WTC11 (cell line): ENCODE measurements at regions of chr9 and their contacts with region 1.

Region 1: DNA sequence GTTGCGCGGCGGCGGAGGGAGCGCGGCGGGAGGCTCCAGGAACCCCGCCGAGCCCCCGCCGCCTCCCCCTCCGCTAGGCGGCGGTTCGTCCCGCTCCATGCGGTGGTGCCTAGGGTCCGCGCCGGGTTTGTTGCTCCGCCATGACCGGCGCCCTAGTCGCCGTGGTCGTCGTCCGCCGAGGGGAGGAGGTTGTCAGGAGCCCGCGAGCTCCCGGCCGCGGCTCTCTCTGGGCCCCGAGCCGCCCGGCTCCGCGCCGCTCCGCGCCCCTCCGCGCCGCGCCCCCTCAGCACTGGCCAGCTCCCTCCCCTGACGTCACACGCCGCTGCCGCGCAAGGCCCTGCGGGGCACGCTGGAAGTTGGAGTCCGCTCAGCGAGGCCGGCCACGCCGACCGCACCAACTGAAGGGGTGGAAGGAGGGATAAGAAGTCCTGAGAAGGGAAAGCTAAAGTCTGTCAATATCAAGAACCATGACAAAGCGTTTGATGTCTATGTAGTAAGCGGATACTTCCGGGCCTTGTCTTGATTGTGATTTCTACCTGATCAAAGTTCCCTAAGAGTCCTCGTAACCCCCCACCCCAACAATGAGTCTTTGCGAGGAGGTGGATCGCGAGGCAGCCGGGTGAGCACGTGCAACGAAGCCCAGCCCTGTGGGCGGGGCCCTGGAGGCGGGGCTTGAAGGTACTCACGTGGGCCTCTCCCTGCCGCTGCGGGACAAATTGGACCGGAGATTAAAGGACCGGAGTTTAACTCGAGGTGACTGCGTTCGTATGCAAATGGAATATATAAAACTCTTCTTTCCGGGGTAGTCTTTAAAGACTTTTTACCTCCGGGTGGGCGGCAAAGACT is at the start of gene NR6A1:
- DNase-seq: peak; percentile 98
- ATAC-seq: peak; percentile 81
- H3K4me3 Mint-ChIP-seq: peak within 1 kb of the TSS; percentile 85
- H3K27ac Mint-ChIP-seq: peak within 1 kb of the TSS; percentile 98
- H3K4me1 Mint-ChIP-seq: peaks cover 42% of the 10 kb centered on the region
- H3K27me3 Mint-ChIP-seq: peaks cover 11% of the 10 kb centered on the region
- CTCF ChIP-seq: no peak
- total RNA-seq, gene NR6A1: 164 to 222 TPM (median 218 TPM) in 3 replicates

Region 2: GRCh38 chr9:124708633-124709291 is 62.5 kb before region 1 on chr9:
- CTCF ChIA-PET with region 1: interaction called, 30 read pairs
- POLR2A ChIA-PET with region 1: interaction called, 4 read pairs
- DNase-seq: no peak
- ATAC-seq: no peak
- H3K4me3 Mint-ChIP-seq: no peak overlapping the region
- H3K27ac Mint-ChIP-seq: peak overlapping the region; percentile 91; the same call in 1 of the 2 replicates
- H3K4me1 Mint-ChIP-seq: peaks cover 50% of the 10 kb centered on the region
- H3K27me3 Mint-ChIP-seq: no peaks in the 10 kb centered on the region
- CTCF ChIP-seq: no peak

Region 3: GRCh38 chr9:124782661-124783574 is 11.7 kb after region 1 on chr9:
- CTCF ChIA-PET with region 1: interaction called, 16 read pairs
- POLR2A ChIA-PET with region 1: interaction called, 13 read pairs
- DNase-seq: peak; percentile 14
- ATAC-seq: peak; percentile 8
- H3K4me3 Mint-ChIP-seq: no peak overlapping the region
- H3K27ac Mint-ChIP-seq: no peak overlapping the region
- H3K4me1 Mint-ChIP-seq: peaks cover 18% of the 10 kb centered on the region
- H3K27me3 Mint-ChIP-seq: peaks cover 7% of the 10 kb centered on the region
- CTCF ChIP-seq: no peak

Region 4: DNA sequence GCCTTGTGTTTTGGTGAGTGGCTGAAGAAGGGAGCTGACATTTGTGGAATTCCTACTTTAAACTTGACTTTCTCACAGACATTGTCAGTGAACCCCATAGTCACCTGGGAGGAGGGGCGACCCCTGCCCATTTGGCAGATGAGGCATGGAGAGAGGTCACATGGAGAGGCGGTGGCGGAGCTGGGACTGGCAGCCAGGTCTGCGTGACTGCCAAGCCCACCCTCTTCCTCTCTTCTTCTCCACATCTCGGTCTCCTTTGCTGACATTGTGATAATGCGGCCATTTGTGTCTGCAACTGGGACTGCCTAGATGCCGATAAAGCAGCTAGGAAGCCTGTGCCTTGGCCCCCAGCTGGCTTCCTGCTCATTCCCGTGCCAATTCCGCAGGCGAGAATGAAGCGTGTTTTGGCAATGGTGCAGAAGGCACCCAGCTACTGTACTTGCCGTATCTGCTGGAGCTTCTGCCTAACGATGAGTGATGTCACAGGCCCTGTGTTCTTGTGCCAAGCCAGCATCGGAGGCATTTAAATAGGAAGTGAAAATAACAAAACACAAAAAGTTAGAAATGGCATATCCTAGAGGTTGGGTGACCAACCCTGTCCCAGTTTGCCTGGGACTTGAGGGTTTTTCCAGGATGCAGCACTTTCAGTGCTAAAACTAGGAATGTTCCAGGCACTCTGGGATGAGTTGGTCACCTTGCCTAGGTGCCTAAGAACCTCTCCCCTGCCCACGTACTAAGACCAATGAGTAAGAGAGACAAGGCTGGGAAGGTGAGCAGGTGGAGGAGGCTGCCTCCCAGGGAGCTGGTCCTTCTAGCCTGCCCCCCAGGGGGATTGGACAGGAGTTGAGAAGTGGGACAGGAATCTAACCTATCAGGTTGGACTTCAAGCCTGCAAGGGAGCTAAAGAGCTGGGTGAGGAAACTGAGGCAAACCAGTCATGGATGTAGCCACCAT is 29.3 kb after region 1 on chr9:
- CTCF ChIA-PET with region 1: interaction called, 25 read pairs
- POLR2A ChIA-PET with region 1: no interaction called
- DNase-seq: no peak
- ATAC-seq: no peak
- H3K4me3 Mint-ChIP-seq: no peak overlapping the region
- H3K27ac Mint-ChIP-seq: peak overlapping the region; percentile 60; the same call in 1 of the 2 replicates
- H3K4me1 Mint-ChIP-seq: 0 out of 2 replicates have a peak, but pooled peaks cover 4% of the 10 kb centered on the region
- H3K27me3 Mint-ChIP-seq: no peaks in the 10 kb centered on the region
- CTCF ChIP-seq: no peak

Region 5: DNA sequence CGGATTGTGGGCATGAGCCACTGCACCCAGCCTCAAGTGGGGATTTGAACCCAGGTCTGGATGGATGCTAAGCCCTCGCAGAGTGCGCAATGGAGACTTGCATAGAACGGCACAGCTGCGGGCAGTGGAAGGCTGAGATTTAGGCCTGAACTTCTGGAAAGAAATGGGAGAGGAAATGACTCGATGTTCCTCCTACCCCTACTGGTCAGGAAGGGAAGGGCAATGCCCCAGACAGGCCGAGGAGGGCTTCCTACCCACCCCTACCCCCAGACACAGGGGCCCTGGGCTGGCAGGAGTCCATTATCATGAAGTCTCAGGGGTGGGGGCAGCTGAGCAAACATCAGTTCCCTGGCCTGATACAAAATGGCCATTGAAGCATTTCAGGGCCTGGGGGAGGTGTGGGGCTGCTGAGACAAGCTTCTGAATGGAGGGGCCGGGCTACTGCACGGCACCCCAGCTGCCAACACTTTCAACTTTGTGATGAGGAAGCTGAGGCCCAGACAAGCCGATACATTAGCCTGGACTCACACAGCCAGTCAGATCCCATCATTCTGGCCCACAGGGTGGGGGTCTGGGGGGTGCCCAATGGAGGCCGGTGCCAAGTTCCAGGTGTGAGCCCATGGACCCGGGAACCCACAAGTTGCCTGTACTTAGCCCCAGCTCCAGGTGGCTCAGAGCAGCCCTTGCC is 68.5 kb after region 1 on chr9:
- CTCF ChIA-PET with region 1: interaction called, 323 read pairs
- POLR2A ChIA-PET with region 1: interaction called, 7 read pairs
- DNase-seq: peak; percentile 74
- ATAC-seq: peak; percentile 90
- H3K4me3 Mint-ChIP-seq: no peak overlapping the region
- H3K27ac Mint-ChIP-seq: peak overlapping the region; percentile 51
- H3K4me1 Mint-ChIP-seq: peaks cover 3% of the 10 kb centered on the region; the same call in 1 of the 2 replicates
- H3K27me3 Mint-ChIP-seq: no peaks in the 10 kb centered on the region
- CTCF ChIP-seq: peak; percentile 70

Region 6: DNA sequence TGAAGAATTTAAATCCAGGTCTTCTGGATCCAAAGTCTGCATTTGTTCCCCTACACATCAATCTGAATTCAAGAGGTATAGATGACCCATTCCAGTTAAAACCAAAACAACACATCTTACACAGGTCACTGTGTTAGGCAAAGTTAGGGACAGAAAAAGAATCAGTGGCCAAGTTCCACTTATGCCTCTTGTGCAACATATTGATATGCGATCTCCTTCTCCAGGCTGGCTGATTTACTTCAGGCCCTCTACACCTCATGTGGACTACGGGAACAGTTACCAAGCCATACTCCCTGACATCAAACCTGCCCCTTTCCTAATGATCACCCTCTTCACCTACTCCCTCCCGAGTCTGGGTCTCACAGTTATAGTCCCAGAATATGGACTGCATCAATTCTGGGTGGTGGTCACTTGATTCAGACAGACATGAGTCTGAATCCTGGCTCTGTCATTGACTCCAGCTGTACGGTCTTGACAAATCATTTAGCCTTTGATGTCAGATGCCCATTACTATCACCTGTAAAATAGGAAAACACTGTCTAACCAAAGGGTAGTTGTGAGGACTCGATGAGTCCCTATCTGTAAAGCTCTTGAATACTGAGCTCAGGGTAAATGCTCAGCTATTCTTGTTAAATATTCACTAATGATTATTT is 143.6 kb after region 1 on chr9:
- CTCF ChIA-PET with region 1: no interaction called
- POLR2A ChIA-PET with region 1: no interaction called
- DNase-seq: no peak
- ATAC-seq: no peak
- H3K4me3 Mint-ChIP-seq: no peak overlapping the region
- H3K27ac Mint-ChIP-seq: no peak overlapping the region
- H3K4me1 Mint-ChIP-seq: no peaks in the 10 kb centered on the region
- H3K27me3 Mint-ChIP-seq: no peaks in the 10 kb centered on the region
- CTCF ChIP-seq: no peak

Region 7: GRCh38 chr9:125153712-125154367 is 382.6 kb after region 1 on chr9:
- CTCF ChIA-PET with region 1: no interaction called
- POLR2A ChIA-PET with region 1: no interaction called
- DNase-seq: no peak
- ATAC-seq: no peak
- H3K4me3 Mint-ChIP-seq: no peak overlapping the region
- H3K27ac Mint-ChIP-seq: no peak overlapping the region
- H3K4me1 Mint-ChIP-seq: peaks cover 4% of the 10 kb centered on the region
- H3K27me3 Mint-ChIP-seq: no peaks in the 10 kb centered on the region
- CTCF ChIP-seq: no peak